ENCODE measurements at regions of chr3 and their contacts with region 1.

Region 1: DNA sequence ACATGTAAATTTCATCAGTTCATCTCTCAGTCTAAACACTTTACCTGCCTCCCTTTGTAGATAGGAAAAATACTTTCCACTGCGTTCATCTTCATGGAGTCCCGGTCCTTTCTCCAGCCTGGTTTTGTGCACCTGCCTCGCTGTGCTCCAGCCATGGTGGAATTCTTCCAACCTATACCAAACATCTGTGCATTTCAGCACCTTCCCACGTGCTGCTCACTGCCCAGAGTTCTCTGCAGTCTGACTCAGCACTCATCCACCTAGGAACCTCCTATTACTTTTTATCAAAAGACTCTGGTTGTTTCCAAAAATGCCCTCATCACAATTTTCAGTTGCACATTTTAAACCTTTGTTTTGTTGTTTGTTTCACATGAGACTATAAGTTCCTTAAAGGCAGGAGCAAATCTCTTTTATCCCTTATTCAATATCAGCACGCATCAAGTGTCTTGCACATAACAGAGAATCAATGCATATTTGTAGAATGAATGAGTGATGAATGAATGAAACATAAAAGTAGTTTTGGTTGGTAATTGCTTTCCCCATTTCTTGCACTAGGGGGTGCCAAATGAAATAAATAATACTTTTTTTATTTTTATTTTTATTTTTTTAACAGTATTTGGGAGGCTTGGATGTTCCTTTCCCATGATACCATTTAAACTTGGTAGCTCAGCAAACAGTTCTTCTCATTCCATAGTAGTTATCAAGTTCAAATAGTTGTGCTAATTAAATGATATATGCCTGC is 30.2 kb upstream of the ADAMTS9 start:
- DNase-seq: peak; percentile 32
- H3K4me3 ChIP-seq: no peak overlapping the region
- H3K27ac ChIP-seq: no peak overlapping the region
- H3K4me1 ChIP-seq: no peaks in the 10 kb centered on the region
- H3K27me3 ChIP-seq: no peaks in the 10 kb centered on the region
- CTCF ChIP-seq: peak; percentile 22 to 31
- POLR2A ChIP-seq: no peak

Region 2: GRCh38 chr3:64595253-64595694 is 122.8 kb before region 1 on chr3:
- CTCF ChIA-PET with region 1: no interaction called
- POLR2A ChIA-PET with region 1: no interaction called
- dilution Hi-C with region 1: no loop called
- intact Hi-C with region 1: no loop called
- DNase-seq: peak; percentile 77
- H3K4me3 ChIP-seq: no peak overlapping the region
- H3K27ac ChIP-seq: no peak overlapping the region
- H3K4me1 ChIP-seq: peaks cover 3% of the 10 kb centered on the region
- H3K27me3 ChIP-seq: no peaks in the 10 kb centered on the region
- CTCF ChIP-seq: no peak
- POLR2A ChIP-seq: no peak

Region 3: DNA sequence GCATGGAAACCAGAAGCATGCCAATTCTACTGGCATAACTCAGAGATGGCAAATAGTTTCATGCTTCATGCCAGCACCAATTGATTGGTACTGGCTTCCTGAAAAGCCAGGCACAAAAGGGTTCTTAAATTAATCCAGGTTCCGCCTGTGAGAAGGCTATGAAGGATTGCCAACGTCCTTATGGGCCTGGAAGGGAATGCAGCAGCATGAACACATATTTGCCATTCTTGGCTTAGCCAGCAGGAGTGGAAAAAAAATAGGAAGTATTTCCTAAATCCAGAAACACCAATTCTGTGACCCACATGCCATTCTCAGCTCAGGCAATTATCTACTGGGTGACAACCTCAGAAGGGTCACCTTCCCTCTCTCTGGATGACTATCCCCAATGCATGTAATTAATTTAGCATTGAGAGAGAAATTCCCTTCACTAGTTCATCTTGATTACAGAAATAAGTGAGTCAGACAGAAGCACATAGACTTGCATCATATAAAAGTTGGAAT is 66.3 kb before region 1 on chr3:
- CTCF ChIA-PET with region 1: no interaction called
- POLR2A ChIA-PET with region 1: no interaction called
- dilution Hi-C with region 1: no loop called
- intact Hi-C with region 1: no loop called
- DNase-seq: peak; percentile 14
- H3K4me3 ChIP-seq: no peak overlapping the region
- H3K27ac ChIP-seq: no peak overlapping the region
- H3K4me1 ChIP-seq: peaks cover 22% of the 10 kb centered on the region
- H3K27me3 ChIP-seq: no peaks in the 10 kb centered on the region
- CTCF ChIP-seq: no peak
- POLR2A ChIP-seq: no peak

Region 4: GRCh38 chr3:65245133-65246063 is 527.4 kb after region 1 on chr3:
- CTCF ChIA-PET with region 1: interaction called, 4 read pairs
- POLR2A ChIA-PET with region 1: no interaction called
- dilution Hi-C with region 1: no loop called
- intact Hi-C with region 1: loop called (anchors 5 kb)
- DNase-seq: peak; percentile 59
- H3K4me3 ChIP-seq: no peak overlapping the region
- H3K27ac ChIP-seq: no peak overlapping the region
- H3K4me1 ChIP-seq: no peaks in the 10 kb centered on the region
- H3K27me3 ChIP-seq: no peaks in the 10 kb centered on the region
- CTCF ChIP-seq: peak; percentile 26 to 33
- POLR2A ChIP-seq: no peak